ENCODE measurements at regions of chr7 and their contacts with region 1.

Region 1: DNA sequence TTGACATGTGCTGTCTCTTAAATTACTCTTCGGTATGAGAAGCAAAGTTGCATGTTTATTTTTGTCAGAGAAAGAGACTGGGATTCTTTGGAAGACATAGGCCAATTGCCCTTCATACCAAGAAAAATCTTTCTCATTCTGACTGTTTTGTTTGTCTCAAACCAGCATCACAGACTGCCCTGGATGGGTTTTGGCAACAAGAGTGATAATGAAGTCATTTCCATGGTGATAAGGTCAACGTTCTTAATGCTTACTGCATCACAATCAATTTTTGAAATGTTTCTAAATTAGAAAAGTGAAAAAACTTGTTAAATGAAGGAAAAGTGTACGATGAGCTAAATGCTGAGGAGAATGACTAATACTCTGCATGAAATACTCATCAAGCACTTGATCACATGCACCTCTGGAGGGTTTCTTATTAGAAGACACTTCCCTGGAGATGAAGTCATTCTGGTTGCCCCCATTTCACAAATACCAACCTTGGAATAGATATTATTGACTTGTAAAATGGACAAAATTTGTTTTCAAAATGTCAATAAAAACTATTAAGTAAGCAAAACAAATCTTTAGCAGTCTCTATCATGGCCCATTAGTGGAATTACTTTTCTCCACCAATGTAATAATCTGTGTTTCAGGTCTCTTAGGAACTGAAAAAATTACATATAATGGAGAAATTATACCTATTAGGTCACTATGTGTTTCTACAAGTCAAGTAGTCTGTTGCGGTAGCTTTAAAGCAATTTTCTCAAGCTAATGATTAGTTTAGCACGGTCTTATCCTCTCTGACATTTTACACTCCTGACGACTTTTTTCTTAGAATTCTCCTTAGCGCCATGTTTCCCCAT is 19.9 kb upstream of the SEC61G start:
- DNase-seq: no peak
- ATAC-seq: no peak
- H3K4me3 ChIP-seq: no peak overlapping the region
- H3K27ac ChIP-seq: no peak overlapping the region
- H3K4me1 ChIP-seq: peaks cover 5% of the 10 kb centered on the region
- H3K27me3 ChIP-seq: no peaks in the 10 kb centered on the region
- CTCF ChIP-seq: no peak
- POLR2A ChIP-seq: no peak

Region 2: GRCh38 chr7:54477083-54477482 is 301.8 kb before region 1 on chr7:
- intact Hi-C with region 1: no loop called
- DNase-seq: no peak
- ATAC-seq: no peak
- H3K4me3 ChIP-seq: no peak overlapping the region
- H3K27ac ChIP-seq: no peak overlapping the region
- H3K4me1 ChIP-seq: no peaks in the 10 kb centered on the region
- H3K27me3 ChIP-seq: no peaks in the 10 kb centered on the region
- CTCF ChIP-seq: no peak
- POLR2A ChIP-seq: no peak

Region 3: GRCh38 chr7:55245271-55245723 is 466.4 kb after region 1 on chr7:
- intact Hi-C with region 1: loop called (anchors 5 kb)
- DNase-seq: no peak
- ATAC-seq: no peak
- H3K4me3 ChIP-seq: no peak overlapping the region
- H3K27ac ChIP-seq: no peak overlapping the region
- H3K4me1 ChIP-seq: no peaks in the 10 kb centered on the region
- H3K27me3 ChIP-seq: no peaks in the 10 kb centered on the region
- CTCF ChIP-seq: no peak
- POLR2A ChIP-seq: no peak